ENCODE measurements at regions of chr9 and their contacts with region 1.

Region 1: DNA sequence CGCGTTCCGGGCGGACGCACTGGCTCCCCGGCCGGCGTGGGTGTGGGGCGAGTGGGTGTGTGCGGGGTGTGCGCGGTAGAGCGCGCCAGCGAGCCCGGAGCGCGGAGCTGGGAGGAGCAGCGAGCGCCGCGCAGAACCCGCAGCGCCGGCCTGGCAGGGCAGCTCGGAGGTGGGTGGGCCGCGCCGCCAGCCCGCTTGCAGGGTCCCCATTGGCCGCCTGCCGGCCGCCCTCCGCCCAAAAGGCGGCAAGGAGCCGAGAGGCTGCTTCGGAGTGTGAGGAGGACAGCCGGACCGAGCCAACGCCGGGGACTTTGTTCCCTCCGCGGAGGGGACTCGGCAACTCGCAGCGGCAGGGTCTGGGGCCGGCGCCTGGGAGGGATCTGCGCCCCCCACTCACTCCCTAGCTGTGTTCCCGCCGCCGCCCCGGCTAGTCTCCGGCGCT is at the start of gene DAPK1:
- DNase-seq: peak; percentile 83
- H3K4me3 ChIP-seq: peak within 1 kb of the TSS; percentile 88 to 95 (median 94)
- H3K27ac ChIP-seq: peak within 1 kb of the TSS; percentile 85 to 94 (median 91)
- H3K4me1 ChIP-seq: peaks cover 0 to 36% (median 28%) of the 10 kb centered on the region in 4 donors
- H3K27me3 ChIP-seq: no peaks in the 10 kb centered on the region
- CTCF ChIP-seq: peak in 1 of 4 experiments; percentile 24
- EP300 ChIP-seq: no peak
- POLR2A ChIP-seq: no peak
- total RNA-seq, gene DAPK1: 78.1 to 92.5 (median 84.4) TPM

Region 2: DNA sequence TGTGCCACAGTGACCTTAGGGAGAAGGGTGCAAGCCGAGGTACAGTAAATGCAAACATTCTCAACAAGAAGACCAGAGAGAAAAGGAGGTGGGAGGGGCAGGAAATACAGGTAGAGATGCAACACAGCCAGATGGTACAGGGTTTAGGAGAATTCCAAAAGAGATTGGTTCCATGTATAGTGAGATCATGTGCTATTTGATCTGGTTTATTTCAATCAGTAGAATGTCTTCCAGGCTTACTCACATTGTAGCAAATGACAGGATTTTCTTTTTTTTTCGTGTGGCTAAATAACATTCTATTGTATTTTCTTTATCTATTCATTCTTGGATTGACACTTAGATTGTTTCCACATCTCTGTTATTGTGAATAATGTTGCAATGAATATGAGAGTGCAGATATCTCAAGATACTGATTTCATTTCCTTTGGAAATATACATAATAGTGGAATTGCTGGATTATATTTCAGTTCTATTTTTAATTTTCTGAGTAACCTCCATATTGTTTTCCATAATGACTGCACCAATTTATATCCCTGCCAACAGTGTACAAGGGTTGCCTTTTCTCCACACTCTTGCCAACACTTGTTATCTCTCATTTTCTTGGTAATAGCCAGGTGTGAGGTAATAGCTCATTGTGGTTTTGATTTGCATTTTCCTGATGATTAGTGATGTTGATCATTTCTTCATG is 442.5 kb before region 1 on chr9:
- intact Hi-C with region 1: no loop called
- DNase-seq: no peak
- H3K4me3 ChIP-seq: no peak overlapping the region
- H3K27ac ChIP-seq: no peak overlapping the region
- H3K4me1 ChIP-seq: no peaks in the 10 kb centered on the region
- H3K27me3 ChIP-seq: no peaks in the 10 kb centered on the region
- CTCF ChIP-seq: no peak
- EP300 ChIP-seq: no peak
- POLR2A ChIP-seq: no peak

Region 3: DNA sequence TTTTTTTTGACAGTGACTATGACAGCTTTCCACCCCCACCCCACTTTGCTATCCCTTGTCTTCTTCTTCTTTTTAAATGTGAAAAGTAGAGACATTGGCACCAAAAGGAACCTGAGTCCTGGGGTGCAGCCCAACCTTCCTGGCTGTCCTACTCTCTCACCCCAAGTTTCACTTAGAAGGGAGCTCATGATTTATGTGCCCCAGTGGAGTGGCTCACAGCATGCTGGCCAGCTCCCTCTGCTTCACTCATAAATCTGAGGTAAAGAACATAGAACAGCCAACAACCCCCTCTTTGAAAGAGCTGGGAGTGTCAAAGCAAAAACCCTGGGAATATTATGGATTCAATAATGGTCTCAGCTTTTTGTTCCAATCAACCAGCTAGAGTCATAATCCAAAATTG is 196.3 kb before region 1 on chr9:
- intact Hi-C with region 1: no loop called
- DNase-seq: no peak
- H3K4me3 ChIP-seq: no peak overlapping the region
- H3K27ac ChIP-seq: no peak overlapping the region
- H3K4me1 ChIP-seq: peaks cover 0 to 17% (median 6%) of the 10 kb centered on the region in 4 donors
- H3K27me3 ChIP-seq: no peaks in the 10 kb centered on the region
- CTCF ChIP-seq: no peak
- EP300 ChIP-seq: no peak
- POLR2A ChIP-seq: no peak

Region 4: GRCh38 chr9:87336914-87337333 is 160.7 kb before region 1 on chr9:
- intact Hi-C with region 1: loop called (anchors 5 kb)
- DNase-seq: no peak
- H3K4me3 ChIP-seq: peak overlapping the region; percentile 19 to 47 (median 44)
- H3K27ac ChIP-seq: peak overlapping the region in 2 of 4 donors; percentile 44 to 53
- H3K4me1 ChIP-seq: peaks cover 0 to 17% (median 10%) of the 10 kb centered on the region in 4 donors
- H3K27me3 ChIP-seq: no peaks in the 10 kb centered on the region
- CTCF ChIP-seq: peak; percentile 63 to 77 (median 71)
- EP300 ChIP-seq: no peak
- POLR2A ChIP-seq: no peak

Region 5: DNA sequence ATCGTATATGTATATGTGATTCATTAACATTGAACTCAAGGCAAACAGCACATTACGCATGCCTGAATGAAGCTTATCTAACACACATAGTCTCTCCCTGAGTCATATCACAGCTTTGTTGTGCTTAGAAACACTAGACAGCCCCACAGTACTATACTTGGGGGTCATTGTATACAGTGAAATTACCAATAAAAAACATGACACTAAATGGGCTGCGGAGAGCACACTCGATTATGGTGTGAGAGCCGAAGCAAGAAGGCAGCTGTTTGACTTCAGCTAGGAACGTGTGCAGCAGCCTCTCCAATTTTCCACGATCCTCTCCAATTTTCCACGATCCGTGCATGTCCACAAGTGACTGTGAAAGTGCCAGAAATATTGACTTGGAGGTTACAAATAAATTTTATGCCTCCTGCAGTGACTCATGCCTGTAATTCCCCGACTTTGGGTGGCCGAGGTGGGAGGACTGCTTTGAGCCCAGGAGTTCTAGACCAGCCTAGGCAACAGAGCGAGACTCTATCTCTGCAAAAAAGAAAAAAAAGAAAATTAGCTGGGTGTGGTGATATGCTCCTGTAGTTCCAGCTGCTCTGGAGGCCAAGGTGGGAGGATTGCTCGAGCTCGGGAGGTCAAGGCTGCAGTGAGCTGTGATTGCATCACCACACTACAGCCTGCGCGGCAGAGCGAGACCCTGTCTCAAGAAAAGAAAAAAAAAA is 102.4 kb after region 1 on chr9:
- intact Hi-C with region 1: loop called (anchors 5 kb)
- DNase-seq: peak; percentile 82
- H3K4me3 ChIP-seq: no peak overlapping the region
- H3K27ac ChIP-seq: peak overlapping the region; percentile 78 to 86 (median 81)
- H3K4me1 ChIP-seq: peaks cover 0 to 95% (median 94%) of the 10 kb centered on the region in 4 donors
- H3K27me3 ChIP-seq: no peaks in the 10 kb centered on the region
- CTCF ChIP-seq: no peak
- EP300 ChIP-seq: no peak
- POLR2A ChIP-seq: no peak

Region 6: GRCh38 chr9:87656485-87656884 is 158.9 kb after region 1 on chr9:
- intact Hi-C with region 1: loop called (anchors 2 kb)
- DNase-seq: no peak
- H3K4me3 ChIP-seq: no peak overlapping the region
- H3K27ac ChIP-seq: peak overlapping the region; percentile 16 to 62 (median 58)
- H3K4me1 ChIP-seq: peaks cover 0 to 22% (median 16%) of the 10 kb centered on the region in 4 donors
- H3K27me3 ChIP-seq: no peaks in the 10 kb centered on the region
- CTCF ChIP-seq: peak in 1 of 4 experiments; percentile 19
- EP300 ChIP-seq: no peak
- POLR2A ChIP-seq: no peak

Measured in sigmoid colon (tissue), 7 donors.